Caco-2 (cell line): ENCODE measurements at regions of chr11 and their contacts with region 1.

Region 1: DNA sequence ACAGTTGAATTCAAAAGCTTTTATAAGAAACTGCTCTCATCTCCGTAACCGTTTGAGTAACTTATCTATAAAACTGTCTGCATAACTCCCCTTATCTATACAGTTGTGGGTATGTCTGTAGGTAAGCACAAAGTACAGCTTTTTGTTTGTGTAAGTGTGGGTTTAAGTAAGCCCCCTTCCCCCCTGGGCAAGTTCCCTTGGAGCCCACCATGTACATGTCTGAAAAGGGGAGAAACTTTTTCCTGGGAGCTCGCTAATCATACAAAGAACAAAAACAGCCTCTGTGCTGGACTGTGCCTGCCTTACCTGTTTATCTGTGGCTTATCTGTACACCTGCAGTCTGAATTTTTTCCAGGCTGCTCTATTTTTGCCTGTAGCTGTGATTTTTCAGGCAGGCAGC is 36.3 kb upstream of the TMEM45B start:
- DNase-seq: peak; percentile 76 to 79
- H3K4me3 ChIP-seq: peak overlapping the region; percentile 11; the same call in 1 of the 2 replicates
- H3K4me3 Mint-ChIP-seq: peak overlapping the region; percentile 71
- H3K27ac Mint-ChIP-seq: peak overlapping the region; percentile 90
- H3K4me1 ChIP-seq: peaks cover 33% of the 10 kb centered on the region
- H3K4me1 Mint-ChIP-seq: peaks cover 30% of the 10 kb centered on the region
- H3K27me3 ChIP-seq: no peaks in the 10 kb centered on the region
- H3K27me3 Mint-ChIP-seq: no peaks in the 10 kb centered on the region
- CTCF ChIP-seq: no peak

Region 2: DNA sequence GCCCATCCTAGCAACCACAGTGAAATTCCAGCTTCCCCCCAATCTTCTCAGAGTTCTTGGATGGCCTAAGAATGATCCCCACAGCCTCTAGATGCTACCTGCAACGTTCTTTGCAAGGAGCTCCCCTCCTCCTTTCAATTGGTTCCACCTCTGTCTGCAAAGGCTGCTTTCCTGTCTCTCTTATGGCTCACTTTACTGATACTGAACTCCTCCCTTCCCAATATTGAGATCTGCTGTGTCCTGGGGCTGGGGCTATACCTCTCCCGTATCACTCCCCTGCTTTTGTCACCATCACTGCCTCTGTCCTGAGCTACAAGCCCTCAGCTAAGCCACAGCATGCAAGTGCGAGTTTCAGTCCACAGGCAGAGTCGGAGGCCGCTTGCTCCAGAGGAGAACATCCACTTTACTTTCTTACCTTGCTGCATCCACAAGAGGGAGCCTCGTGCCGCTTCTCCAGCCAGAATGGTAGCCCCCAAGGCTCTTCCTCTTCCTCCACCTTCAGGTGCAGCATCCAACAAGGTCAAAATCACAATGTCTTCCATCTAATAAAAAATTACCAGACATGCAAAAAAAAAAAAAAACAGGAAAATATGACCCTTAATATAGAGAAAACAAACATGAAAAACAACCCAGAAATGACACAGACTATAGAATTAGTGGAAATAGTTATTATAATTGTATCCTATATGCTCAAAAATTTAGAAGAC is 12.3 kb before region 1 on chr11:
- CTCF ChIA-PET with region 1: interaction called, 11 read pairs
- POLR2A ChIA-PET with region 1: no interaction called
- intact Hi-C with region 1: loop called (anchors 1 kb)
- DNase-seq: peak; percentile 75 to 78
- H3K4me3 ChIP-seq: no peak overlapping the region
- H3K4me3 Mint-ChIP-seq: no peak overlapping the region
- H3K27ac Mint-ChIP-seq: peak overlapping the region; percentile 2
- H3K4me1 ChIP-seq: peaks cover 27% of the 10 kb centered on the region
- H3K4me1 Mint-ChIP-seq: peaks cover 25% of the 10 kb centered on the region
- H3K27me3 ChIP-seq: no peaks in the 10 kb centered on the region
- H3K27me3 Mint-ChIP-seq: no peaks in the 10 kb centered on the region
- CTCF ChIP-seq: peak; percentile 89 to 93